Dendritic cell treated with granulocyte-macrophage colony-stimulating factor and Interleukin-4, amounts not matched to agents 40 ng/mL and 50 ng/mL, for 4 days (primary cell): ENCODE measurements at regions of chr19 and their contacts with region 1.

Region 1: DNA sequence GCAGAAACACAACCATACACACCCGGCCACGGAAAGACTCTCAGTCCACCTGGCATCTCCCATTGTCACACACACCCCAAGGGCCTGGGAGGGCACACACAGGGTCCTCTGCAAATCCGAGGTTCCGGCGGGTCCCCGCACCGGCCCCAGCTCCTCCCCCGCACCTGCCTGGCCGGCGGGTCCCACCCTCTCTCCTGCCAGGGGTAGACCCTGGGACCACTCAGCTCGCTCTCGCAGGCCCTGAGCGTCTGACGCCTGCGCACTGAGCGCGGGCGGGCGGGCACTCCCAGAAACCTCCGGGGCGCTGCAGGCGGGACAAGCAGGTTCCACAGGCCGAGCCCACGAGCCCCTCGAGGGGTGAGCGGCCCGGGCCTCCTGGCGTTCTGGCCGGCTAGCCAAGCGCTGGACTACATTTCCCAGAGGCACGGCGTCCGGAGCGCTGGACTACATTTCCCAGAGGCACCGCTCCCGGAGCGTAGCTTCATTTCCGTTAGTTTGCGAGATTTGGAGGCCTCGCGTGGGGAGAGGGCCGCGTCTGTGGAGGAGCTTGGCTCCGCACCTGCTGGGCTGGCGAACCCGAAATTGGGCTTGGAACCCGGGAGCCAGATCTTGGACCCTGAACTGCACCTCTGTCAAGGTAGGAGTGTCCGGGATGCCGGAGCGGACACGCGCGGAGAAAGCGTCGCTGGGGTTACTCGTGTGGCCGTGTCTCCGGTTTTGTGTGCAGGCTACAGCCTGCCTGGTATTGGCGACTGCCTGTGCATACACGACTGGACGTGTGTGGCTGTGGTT is at the start of gene ZNF420:
- H3K4me3 Mint-ChIP-seq: peak within 1 kb of the TSS; percentile 85
- H3K27ac Mint-ChIP-seq: peak within 1 kb of the TSS; percentile 84
- H3K4me1 Mint-ChIP-seq: peaks cover 23% of the 10 kb centered on the region
- H3K27me3 Mint-ChIP-seq: no peaks in the 10 kb centered on the region

Region 2: DNA sequence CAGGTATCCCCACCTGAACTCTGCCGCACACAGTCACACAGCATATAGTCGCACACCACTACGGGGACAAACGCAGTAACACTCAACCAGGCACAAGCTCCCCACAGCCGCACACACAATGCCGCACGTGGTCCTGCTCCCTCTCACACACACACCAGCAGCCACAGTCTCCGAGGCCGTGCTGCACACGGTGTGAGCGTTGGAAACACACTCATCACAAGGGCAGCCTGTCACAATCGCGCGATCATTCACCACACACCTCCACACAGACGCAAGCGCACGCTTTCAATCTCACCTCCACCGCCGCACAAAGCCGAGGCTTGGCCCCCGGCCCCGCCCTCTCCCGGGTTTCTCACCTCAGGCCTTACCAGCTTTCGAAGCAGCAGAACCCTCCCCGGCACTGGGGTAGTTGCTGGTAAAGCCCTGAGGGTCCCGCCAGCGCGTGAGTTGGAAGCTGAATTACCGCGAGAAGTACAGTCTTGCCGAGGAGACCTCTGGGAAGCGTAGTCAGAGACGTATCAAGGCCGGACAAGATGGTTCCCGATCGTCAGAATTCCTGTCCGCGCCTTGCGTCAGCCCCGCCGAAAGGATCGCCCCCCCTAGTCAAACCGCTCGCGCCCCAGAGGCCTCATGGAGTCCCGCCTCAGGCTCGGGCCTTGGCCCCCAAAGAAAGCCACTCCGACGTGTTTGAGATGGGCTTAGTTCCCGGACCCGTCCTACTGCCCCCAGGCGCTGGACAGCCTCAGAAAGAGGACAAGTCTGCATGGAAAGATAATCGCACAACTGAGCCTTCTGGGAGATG is 588.8 kb before region 1 on chr19 and contains the start of gene ZNF566:
- intact Hi-C with region 1: loop called (anchors 2 kb)
- H3K4me3 Mint-ChIP-seq: peak within 1 kb of the TSS; percentile 99
- H3K27ac Mint-ChIP-seq: peak within 1 kb of the TSS; percentile 94
- H3K4me1 Mint-ChIP-seq: peaks cover 27% of the 10 kb centered on the region
- H3K27me3 Mint-ChIP-seq: no peaks in the 10 kb centered on the region

Region 3: GRCh38 chr19:36850559-36851442 is 227.3 kb before region 1 on chr19 and contains the start of gene ZNF345:
- intact Hi-C with region 1: loop called (anchors 2 kb)
- H3K4me3 Mint-ChIP-seq: no peak within 1 kb of the TSS
- H3K27ac Mint-ChIP-seq: no peak within 1 kb of the TSS
- H3K4me1 Mint-ChIP-seq: peaks cover 6% of the 10 kb centered on the region
- H3K27me3 Mint-ChIP-seq: no peaks in the 10 kb centered on the region

Region 4: GRCh38 chr19:37095859-37096258 is 17.7 kb after region 1 on chr19:
- intact Hi-C with region 1: no loop called
- H3K4me3 Mint-ChIP-seq: no peak overlapping the region
- H3K27ac Mint-ChIP-seq: no peak overlapping the region
- H3K4me1 Mint-ChIP-seq: no peaks in the 10 kb centered on the region
- H3K27me3 Mint-ChIP-seq: no peaks in the 10 kb centered on the region

Region 5: DNA sequence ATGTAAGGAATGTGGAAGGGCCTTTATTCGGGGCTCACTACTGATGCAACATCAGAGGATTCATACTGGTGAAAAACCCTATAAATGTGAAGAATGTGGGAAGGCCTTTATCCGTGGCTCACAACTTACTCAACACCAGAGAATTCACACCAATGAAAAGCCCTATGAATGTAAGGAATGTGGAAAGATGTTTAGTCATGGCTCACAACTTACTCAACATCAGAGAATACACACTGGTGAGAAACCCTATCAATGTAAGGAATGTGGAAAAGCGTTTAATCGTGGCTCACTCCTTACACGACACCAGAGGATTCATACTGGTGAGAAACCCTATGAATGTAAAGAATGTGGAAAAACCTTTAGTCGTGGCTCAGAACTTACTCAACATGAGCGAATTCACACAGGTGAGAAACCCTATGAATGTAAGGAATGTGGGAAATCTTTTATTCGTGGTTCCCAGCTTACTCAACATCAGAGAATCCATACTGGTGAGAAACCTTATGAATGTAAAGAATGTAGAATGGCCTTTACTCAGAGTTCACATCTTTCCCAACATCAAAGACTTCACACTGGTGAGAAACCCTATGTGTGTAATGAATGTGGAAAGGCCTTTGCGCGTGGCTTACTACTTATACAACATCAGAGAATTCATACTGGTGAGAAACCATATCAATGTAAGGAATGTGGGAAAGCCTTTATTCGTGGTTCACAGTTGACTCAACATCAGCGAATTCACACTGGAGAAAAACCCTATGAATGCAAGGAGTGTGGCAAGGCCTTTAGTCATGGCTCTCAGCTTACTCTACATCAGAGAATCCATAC is 50.1 kb after region 1 on chr19:
- intact Hi-C with region 1: no loop called
- H3K4me3 Mint-ChIP-seq: no peak overlapping the region
- H3K27ac Mint-ChIP-seq: no peak overlapping the region
- H3K4me1 Mint-ChIP-seq: no peaks in the 10 kb centered on the region
- H3K27me3 Mint-ChIP-seq: no peaks in the 10 kb centered on the region

Region 6: GRCh38 chr19:37172368-37173366 is 94.5 kb after region 1 on chr19 and contains the start of gene ZNF585A:
- intact Hi-C with region 1: loop called (anchors 5 kb)
- H3K4me3 Mint-ChIP-seq: no peak within 1 kb of the TSS
- H3K27ac Mint-ChIP-seq: no peak within 1 kb of the TSS
- H3K4me1 Mint-ChIP-seq: no peaks in the 10 kb centered on the region
- H3K27me3 Mint-ChIP-seq: no peaks in the 10 kb centered on the region

Region 7: GRCh38 chr19:37334179-37335071 is 256.3 kb after region 1 on chr19:
- intact Hi-C with region 1: loop called (anchors 5 kb)
- H3K4me3 Mint-ChIP-seq: peak overlapping the region; percentile 95
- H3K27ac Mint-ChIP-seq: peak overlapping the region; percentile 91
- H3K4me1 Mint-ChIP-seq: peaks cover 14% of the 10 kb centered on the region
- H3K27me3 Mint-ChIP-seq: no peaks in the 10 kb centered on the region